ENCODE measurements at regions of chr7 and their contacts with region 1.

Region 1: DNA sequence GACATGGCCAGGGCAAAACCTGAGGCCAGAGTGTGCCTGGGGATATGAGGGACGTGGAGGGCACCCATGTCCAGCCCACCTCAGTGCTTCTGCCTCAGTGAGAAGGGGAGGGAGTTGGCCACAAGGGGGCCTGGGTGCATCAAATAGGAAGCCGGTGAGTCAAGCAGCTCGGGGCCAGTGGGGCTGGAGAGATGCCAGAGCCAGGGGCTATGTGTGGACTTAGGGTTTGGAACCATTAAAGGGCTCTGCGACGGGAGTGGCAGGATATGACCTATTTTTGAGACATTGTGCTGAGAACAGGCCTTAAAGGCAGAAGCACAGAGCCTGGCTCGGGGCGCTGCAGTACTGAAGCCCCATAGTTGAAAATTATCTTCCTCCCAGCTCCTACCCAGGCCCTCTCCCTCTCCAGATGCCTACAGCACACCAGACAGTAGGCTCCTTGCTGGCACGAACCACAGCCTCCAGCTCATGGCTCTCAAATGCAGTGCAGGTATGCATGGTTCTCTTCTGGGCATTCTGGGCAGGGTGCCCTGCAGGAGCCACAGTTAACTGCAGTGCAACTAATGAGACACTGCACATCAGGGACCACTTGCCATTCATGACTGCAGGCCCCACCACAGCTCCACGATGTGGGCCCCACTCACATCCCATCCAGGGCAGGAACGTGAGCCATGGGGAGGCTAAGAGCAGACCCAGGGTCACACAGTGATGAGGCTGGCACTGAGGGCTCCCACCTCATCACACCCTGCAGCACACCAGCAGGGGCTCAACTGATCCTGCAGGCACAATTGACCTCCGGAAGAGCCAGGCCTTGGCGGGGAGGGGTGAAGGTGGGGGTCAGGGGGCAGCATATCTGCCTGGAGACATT is 7.2 kb upstream of the PGAM2 start:
- DNase-seq: peak; percentile 44
- H3K4me3 ChIP-seq: no peak overlapping the region
- H3K27me3 ChIP-seq: no peaks in the 10 kb centered on the region
- CTCF ChIP-seq: peak; percentile 92

Region 2: GRCh38 chr7:44123190-44124003 is 50.8 kb after region 1 on chr7 and contains the start of gene POLD2:
- CTCF ChIA-PET with region 1: interaction called, 24 read pairs
- POLR2A ChIA-PET with region 1: no interaction called
- DNase-seq: peak; percentile 77
- H3K4me3 ChIP-seq: peak within 1 kb of the TSS; percentile 80
- H3K27me3 ChIP-seq: no peaks in the 10 kb centered on the region
- CTCF ChIP-seq: no peak
- polyA plus RNA-seq, gene POLD2: 54.8 and 87.2 TPM in 2 replicates